GM10248 (cell line): ENCODE measurements at regions of chr12 and their contacts with region 1.

Region 1: GRCh38 chr12:62435303-62436163 is 31.1 kb upstream of the MON2 start:
- DNase-seq: peak; percentile 65
- CTCF ChIP-seq: peak; percentile 59

Region 2: GRCh38 chr12:62446754-62447452 is 11.4 kb after region 1 on chr12:
- CTCF ChIA-PET with region 1: interaction called, 14 read pairs
- POLR2A ChIA-PET with region 1: no interaction called
- DNase-seq: no peak
- CTCF ChIP-seq: no peak

Region 3: DNA sequence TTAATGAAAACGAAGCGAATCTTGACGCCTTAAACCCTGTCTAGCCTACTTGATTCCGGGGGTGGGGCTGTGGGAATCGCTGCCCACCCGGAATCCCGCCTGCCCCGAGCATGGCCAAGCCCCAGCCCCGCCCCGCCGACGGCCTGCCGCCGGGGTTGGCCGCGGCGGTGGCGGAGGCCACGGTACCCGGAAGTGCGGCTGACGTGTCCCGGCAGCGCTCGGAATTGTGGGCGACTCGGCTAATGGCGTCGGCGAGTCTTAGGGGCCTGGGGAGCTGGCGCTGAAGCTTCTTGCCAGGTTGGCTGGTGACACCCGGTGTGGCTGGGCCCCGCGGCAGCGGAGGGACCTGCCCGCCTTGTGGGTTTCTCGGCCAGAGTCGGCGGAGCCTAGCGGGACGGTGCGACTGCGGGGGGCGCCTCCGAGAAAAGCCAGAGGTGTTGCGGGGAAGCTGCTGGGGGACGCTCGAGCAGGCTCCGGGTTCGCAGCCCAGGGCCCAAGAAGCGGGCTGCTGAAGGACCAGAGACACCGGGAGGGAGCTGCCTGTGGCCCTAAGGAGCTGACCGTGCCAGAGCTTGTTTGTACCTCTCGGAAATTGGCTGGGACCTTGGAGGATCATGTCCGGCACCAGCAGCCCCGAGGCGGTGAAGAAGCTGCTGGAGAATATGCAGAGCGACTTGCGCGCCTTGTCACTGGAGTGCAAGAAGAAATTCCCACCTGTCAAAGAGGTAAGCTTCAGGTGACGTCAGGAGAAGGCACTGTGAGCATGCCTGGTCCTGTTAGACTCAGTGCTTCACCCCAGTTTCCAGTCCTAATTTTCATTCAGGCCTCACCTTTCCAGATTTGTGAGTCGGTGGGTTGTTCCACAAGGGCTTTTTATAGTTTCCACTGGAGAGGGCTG is 31.3 kb after region 1 on chr12 and contains the start of gene MON2:
- CTCF ChIA-PET with region 1: interaction called, 20 read pairs
- POLR2A ChIA-PET with region 1: no interaction called
- DNase-seq: peak; percentile 96
- CTCF ChIP-seq: no peak

Region 4: DNA sequence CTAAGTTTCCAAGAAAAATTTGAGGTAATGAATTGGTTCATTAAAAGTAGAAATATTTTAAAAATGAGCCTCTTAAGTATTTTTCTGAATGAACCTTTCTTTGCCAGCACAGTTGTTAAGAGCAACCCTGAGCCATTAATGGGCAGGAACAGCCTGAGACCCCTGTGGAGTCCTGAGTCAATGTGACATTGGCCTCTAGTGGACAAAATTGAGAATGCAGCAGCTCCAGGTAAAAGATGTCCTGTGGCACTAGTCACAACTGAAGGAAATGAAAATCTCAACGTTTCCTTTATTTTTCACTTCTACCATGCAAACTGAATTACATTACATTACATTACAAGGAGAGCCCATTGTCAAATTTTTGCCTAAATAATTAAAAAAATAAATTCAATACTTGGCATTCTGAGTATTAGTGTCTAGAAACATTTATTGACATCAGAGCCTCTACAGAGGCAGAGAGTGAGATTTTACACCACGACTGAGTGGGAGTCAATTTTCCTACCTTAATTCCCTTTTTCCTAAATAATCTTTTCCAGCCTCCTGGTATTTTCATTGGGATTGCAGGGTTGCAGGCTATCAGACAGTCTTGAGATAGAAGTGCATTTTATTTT is 363.7 kb after region 1 on chr12:
- CTCF ChIA-PET with region 1: interaction called, 161 read pairs
- POLR2A ChIA-PET with region 1: no interaction called
- DNase-seq: peak; percentile 71
- CTCF ChIP-seq: peak; percentile 85